Endothelial cell of umbilical vein (primary cell): ENCODE measurements at regions of chr1 and their contacts with region 1.

Region 1: GRCh38 chr1:96966536-96967138 is 245.1 kb downstream of the PTBP2 start:
- DNase-seq: peak; percentile 84
- H3K4me3 ChIP-seq: peak overlapping the region in 1 of 3 experiments; percentile 38
- H3K27ac ChIP-seq: no peak overlapping the region
- H3K4me1 ChIP-seq: no peaks in the 10 kb centered on the region
- H3K27me3 ChIP-seq: peaks cover 7 to 12% of the 10 kb centered on the region in 2 experiments
- CTCF ChIP-seq: peak; percentile 81 to 85
- POLR2A ChIP-seq: no peak

Region 2: DNA sequence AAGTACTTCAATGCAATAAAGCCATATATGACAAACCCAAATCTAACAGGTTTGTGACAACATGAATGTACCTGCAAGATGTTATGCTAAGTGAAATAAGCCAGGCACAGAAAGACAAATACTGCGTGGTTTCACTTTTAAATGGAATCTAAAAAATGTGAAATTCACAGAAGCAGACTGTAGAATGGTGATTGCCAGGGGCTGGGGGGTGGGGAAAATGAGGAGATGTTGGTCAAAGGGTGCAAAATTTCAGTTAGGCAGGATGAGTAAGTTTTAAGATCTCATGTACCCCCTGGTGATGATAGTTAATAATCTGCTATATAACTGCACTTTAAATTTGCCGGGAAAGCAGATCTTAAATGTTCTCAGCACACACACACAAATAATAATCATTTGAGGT is 84.5 kb before region 1 on chr1:
- CTCF ChIA-PET with region 1: no interaction called
- POLR2A ChIA-PET with region 1: no interaction called
- dilution Hi-C with region 1: no loop called
- intact Hi-C with region 1: no loop called
- DNase-seq: no peak
- H3K4me3 ChIP-seq: no peak overlapping the region
- H3K27ac ChIP-seq: no peak overlapping the region
- H3K4me1 ChIP-seq: peaks cover 3% of the 10 kb centered on the region
- H3K27me3 ChIP-seq: no peaks in the 10 kb centered on the region
- CTCF ChIP-seq: no peak
- POLR2A ChIP-seq: no peak

Region 3: DNA sequence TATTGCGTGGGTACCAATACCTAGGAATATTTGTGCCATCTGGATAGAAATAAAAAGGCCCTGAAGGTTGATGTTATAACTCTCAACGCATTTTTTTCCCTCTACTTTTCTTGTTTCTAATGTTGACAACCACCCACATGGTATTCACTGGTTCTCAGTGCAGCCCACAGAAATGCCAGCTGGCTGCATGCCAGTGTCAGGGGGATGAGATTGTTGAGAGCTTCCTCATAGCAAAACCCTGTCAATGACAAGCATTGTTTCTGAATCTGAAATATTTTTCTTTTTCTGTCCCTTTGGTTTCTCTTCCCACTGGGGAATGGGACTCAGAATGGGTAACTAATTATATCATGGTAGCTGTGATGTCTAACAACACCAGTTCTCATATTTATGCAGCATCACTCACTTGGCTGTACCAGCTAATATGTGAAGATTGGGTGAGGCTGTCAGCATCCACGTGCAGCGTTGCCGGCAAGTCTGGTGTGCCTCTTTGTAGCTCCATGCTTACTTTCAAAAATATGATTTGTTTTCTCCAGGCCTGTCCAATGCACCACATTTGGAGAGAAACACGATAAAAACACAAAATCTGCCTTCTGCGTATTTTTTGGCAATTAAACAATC is 39.5 kb after region 1 on chr1:
- CTCF ChIA-PET with region 1: no interaction called
- POLR2A ChIA-PET with region 1: no interaction called
- dilution Hi-C with region 1: no loop called
- intact Hi-C with region 1: no loop called
- DNase-seq: peak; percentile 73
- H3K4me3 ChIP-seq: no peak overlapping the region
- H3K27ac ChIP-seq: no peak overlapping the region
- H3K4me1 ChIP-seq: no peaks in the 10 kb centered on the region
- H3K27me3 ChIP-seq: no peaks in the 10 kb centered on the region
- CTCF ChIP-seq: no peak
- POLR2A ChIP-seq: no peak

Region 4: DNA sequence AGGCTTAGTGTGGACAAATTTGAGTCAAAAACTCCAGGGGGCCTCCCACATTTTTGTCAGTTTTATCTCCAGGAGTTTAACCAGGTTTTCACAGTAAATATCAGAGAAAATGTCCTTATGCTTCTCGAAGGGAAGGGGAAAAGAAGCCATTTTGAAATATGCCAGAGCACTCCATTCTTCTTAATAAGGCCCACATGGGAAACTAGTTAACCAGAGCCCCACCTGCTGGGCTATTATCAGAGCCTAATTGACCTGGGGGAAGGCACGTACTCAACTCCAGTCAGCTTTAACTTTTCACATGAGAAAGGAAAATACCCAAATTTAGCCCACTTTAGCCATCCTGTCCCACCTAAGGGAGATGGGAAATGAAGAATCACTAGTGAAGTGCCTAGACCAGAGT is 51.3 kb after region 1 on chr1:
- CTCF ChIA-PET with region 1: interaction called, 7 read pairs
- POLR2A ChIA-PET with region 1: no interaction called
- dilution Hi-C with region 1: no loop called
- intact Hi-C with region 1: loop called (anchors 1 kb)
- DNase-seq: no peak
- H3K4me3 ChIP-seq: no peak overlapping the region
- H3K27ac ChIP-seq: no peak overlapping the region
- H3K4me1 ChIP-seq: peaks cover 17% of the 10 kb centered on the region
- H3K27me3 ChIP-seq: no peaks in the 10 kb centered on the region
- CTCF ChIP-seq: no peak
- POLR2A ChIP-seq: no peak

Region 5: DNA sequence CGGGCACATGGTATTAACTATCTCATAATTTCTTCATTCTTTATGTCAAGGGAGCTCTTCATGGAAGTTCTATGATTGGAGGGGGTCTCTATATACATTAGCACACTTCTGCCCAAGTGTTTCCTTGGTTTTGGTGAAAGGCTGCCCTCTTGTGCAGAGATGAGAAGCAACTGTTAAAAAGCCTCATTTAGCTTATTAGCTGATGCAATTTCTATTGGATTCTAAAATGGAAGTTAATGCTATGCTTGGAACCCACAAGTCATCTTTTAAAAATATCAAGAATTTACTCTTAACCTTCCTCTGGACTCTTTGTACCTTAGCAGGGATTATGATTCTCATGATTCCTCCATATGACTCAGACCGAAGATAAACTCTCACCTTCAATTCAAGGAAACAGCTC is 83.9 kb after region 1 on chr1:
- CTCF ChIA-PET with region 1: interaction called, 122 read pairs
- POLR2A ChIA-PET with region 1: no interaction called
- dilution Hi-C with region 1: no loop called
- intact Hi-C with region 1: loop called (anchors 1 kb)
- DNase-seq: peak; percentile 62
- H3K4me3 ChIP-seq: no peak overlapping the region
- H3K27ac ChIP-seq: no peak overlapping the region
- H3K4me1 ChIP-seq: no peaks in the 10 kb centered on the region
- H3K27me3 ChIP-seq: no peaks in the 10 kb centered on the region
- CTCF ChIP-seq: peak; percentile 19 to 47
- POLR2A ChIP-seq: no peak

Region 6: DNA sequence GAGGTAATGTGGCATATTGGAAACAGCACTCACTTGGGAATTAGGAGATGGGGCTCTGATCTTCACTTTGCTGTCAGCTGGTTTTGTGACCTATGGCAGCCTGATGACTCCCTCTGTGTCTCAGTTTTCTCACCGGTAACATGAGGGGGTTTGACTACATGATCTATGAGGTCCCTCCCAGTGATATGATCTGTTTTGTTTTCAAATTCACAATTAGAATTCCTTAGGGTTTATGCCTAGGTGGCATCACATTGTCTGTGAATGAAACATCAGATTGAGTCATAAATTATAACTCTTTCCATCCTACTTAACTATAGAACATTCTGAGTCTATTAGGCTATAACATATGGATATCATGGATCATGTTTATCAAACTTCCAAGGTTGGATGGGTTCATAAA is 141.5 kb after region 1 on chr1:
- CTCF ChIA-PET with region 1: no interaction called
- POLR2A ChIA-PET with region 1: no interaction called
- dilution Hi-C with region 1: no loop called
- intact Hi-C with region 1: no loop called
- DNase-seq: no peak
- H3K4me3 ChIP-seq: no peak overlapping the region
- H3K27ac ChIP-seq: no peak overlapping the region
- H3K4me1 ChIP-seq: no peaks in the 10 kb centered on the region
- H3K27me3 ChIP-seq: no peaks in the 10 kb centered on the region
- CTCF ChIP-seq: no peak
- POLR2A ChIP-seq: no peak

Region 7: GRCh38 chr1:97137862-97138514 is 171.4 kb after region 1 on chr1:
- CTCF ChIA-PET with region 1: interaction called, 4 read pairs
- POLR2A ChIA-PET with region 1: no interaction called
- dilution Hi-C with region 1: no loop called
- intact Hi-C with region 1: loop called (anchors 10 kb)
- DNase-seq: peak; percentile 95
- H3K4me3 ChIP-seq: no peak overlapping the region
- H3K27ac ChIP-seq: peak overlapping the region; percentile 27
- H3K4me1 ChIP-seq: peaks cover 10% of the 10 kb centered on the region
- H3K27me3 ChIP-seq: no peaks in the 10 kb centered on the region
- CTCF ChIP-seq: peak; percentile 52 to 65
- POLR2A ChIP-seq: no peak

Region 8: GRCh38 chr1:97524211-97524610 is 557.6 kb after region 1 on chr1:
- CTCF ChIA-PET with region 1: interaction called, 3 read pairs
- POLR2A ChIA-PET with region 1: no interaction called
- dilution Hi-C with region 1: no loop called
- intact Hi-C with region 1: loop called (anchors 1 kb)
- DNase-seq: no peak
- H3K4me3 ChIP-seq: no peak overlapping the region
- H3K27ac ChIP-seq: no peak overlapping the region
- H3K4me1 ChIP-seq: no peaks in the 10 kb centered on the region
- H3K27me3 ChIP-seq: no peaks in the 10 kb centered on the region
- CTCF ChIP-seq: no peak
- POLR2A ChIP-seq: no peak

Region 9: GRCh38 chr1:97820470-97821188 is 854.0 kb after region 1 on chr1:
- CTCF ChIA-PET with region 1: no interaction called
- POLR2A ChIA-PET with region 1: no interaction called
- dilution Hi-C with region 1: no loop called
- intact Hi-C with region 1: loop called (anchors 1 kb)
- DNase-seq: peak; percentile 62
- H3K4me3 ChIP-seq: no peak overlapping the region
- H3K27ac ChIP-seq: no peak overlapping the region
- H3K4me1 ChIP-seq: no peaks in the 10 kb centered on the region
- H3K27me3 ChIP-seq: no peaks in the 10 kb centered on the region
- CTCF ChIP-seq: peak; percentile 21 to 29
- POLR2A ChIP-seq: no peak